ENCODE measurements at regions of chr12 and their contacts with region 1.

Region 1: GRCh38 chr12:14845350-14845750 is 2.0 kb upstream of the ART4 start:
- DNase-seq: peak; percentile 42
- H3K4me3 ChIP-seq: no peak overlapping the region
- H3K27ac ChIP-seq: no peak overlapping the region
- H3K4me1 ChIP-seq: peaks cover 22% of the 10 kb centered on the region
- H3K27me3 ChIP-seq: no peaks in the 10 kb centered on the region
- CTCF ChIP-seq: peak; percentile 74 to 81

Region 2: GRCh38 chr12:14629832-14630710 is 215.3 kb before region 1 on chr12:
- CTCF ChIA-PET with region 1: no interaction called
- dilution Hi-C with region 1: no loop called
- in situ Hi-C with region 1: no loop called
- intact Hi-C with region 1: loop called (anchors 10 kb)
- DNase-seq: peak; percentile 56
- H3K4me3 ChIP-seq: no peak overlapping the region
- H3K27ac ChIP-seq: no peak overlapping the region
- H3K4me1 ChIP-seq: no peaks in the 10 kb centered on the region
- H3K27me3 ChIP-seq: no peaks in the 10 kb centered on the region
- CTCF ChIP-seq: peak; percentile 99 to 100

Region 3: GRCh38 chr12:14810953-14811483 is 34.3 kb before region 1 on chr12:
- CTCF ChIA-PET with region 1: no interaction called
- dilution Hi-C with region 1: no loop called
- in situ Hi-C with region 1: no loop called
- intact Hi-C with region 1: loop called (anchors 1 kb)
- DNase-seq: peak; percentile 19
- H3K4me3 ChIP-seq: no peak overlapping the region
- H3K27ac ChIP-seq: no peak overlapping the region
- H3K4me1 ChIP-seq: no peaks in the 10 kb centered on the region
- H3K27me3 ChIP-seq: no peaks in the 10 kb centered on the region
- CTCF ChIP-seq: peak; percentile 65 to 85

Region 4: DNA sequence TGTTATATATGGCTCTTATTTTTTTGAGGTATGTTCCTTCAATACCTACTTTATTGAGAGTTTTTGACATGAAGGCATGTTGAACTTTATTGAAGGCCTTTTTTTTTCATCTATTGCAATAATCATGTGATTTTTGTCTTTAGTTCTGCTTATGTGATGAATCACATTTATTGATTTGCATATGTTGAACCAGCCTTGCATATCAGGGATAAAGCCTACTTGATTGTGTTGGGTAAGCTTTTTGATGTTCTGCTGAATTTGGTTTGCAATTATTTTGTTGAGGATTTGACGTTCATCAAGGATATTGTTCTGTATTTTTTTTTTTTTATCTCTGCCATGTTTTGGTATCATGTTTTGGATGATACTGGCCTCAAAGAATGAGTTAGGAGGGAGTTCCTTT is 13.2 kb after region 1 on chr12:
- CTCF ChIA-PET with region 1: no interaction called
- dilution Hi-C with region 1: no loop called
- in situ Hi-C with region 1: no loop called
- intact Hi-C with region 1: no loop called
- DNase-seq: no peak
- H3K4me3 ChIP-seq: no peak overlapping the region
- H3K27ac ChIP-seq: no peak overlapping the region
- H3K4me1 ChIP-seq: no peaks in the 10 kb centered on the region
- H3K27me3 ChIP-seq: no peaks in the 10 kb centered on the region
- CTCF ChIP-seq: no peak

Region 5: DNA sequence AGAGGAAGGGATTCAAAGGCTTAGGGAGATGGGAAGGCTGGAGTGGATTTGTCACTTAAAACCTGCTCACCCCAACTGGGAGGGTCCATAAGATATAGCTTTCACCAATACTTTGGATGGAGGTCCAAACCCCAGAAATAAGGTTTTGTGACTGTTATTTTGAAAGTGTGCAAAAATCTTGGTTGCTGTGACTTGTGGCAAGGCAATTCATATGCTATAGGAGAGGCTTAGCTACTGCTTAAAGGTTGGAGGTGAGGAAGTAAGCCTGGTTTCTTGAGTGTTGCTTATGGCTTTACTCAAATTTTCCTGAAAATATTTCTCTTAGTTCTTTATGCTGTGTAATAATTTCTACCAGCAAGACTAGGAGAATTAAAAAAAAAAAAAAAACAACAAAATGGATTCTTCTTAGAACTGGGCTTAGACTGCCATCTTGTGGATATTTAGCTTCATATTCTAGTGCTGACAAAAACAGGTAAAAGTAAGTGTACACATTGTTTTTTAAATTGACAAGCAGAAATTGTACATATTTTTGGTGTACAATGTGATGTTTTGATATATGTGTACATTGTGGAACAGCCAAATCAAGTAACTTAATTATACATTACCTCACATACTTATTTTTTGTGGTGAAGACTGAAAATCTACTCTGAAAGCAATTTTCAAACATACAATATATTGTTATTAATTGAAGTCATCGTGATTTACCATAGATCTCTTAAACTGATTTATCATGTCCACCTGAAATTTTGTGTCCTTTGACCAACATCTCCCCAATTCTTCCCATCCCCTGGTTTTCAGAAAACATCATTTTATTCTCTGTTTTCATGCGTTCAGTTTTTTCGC is 150.5 kb after region 1 on chr12:
- CTCF ChIA-PET with region 1: no interaction called
- dilution Hi-C with region 1: no loop called
- in situ Hi-C with region 1: loop called (anchors 5 kb)
- intact Hi-C with region 1: loop called (anchors 1 kb)
- DNase-seq: peak; percentile 29
- H3K4me3 ChIP-seq: no peak overlapping the region
- H3K27ac ChIP-seq: no peak overlapping the region
- H3K4me1 ChIP-seq: peaks cover 2% of the 10 kb centered on the region
- H3K27me3 ChIP-seq: no peaks in the 10 kb centered on the region
- CTCF ChIP-seq: peak; percentile 61 to 63

Region 6: GRCh38 chr12:15276088-15276698 is 430.8 kb after region 1 on chr12:
- CTCF ChIA-PET with region 1: no interaction called
- dilution Hi-C with region 1: no loop called
- in situ Hi-C with region 1: no loop called
- intact Hi-C with region 1: loop called (anchors 10 kb)
- DNase-seq: peak; percentile 48
- H3K4me3 ChIP-seq: no peak overlapping the region
- H3K27ac ChIP-seq: peak overlapping the region; percentile 88
- H3K4me1 ChIP-seq: peaks cover 54% of the 10 kb centered on the region
- H3K27me3 ChIP-seq: no peaks in the 10 kb centered on the region
- CTCF ChIP-seq: peak; percentile 55 to 58

Measured in mammary epithelial cell (primary cell).